Transverse colon (tissue), 4 donors: ENCODE measurements at regions of chr6 and their contacts with region 1.

Region 1: DNA sequence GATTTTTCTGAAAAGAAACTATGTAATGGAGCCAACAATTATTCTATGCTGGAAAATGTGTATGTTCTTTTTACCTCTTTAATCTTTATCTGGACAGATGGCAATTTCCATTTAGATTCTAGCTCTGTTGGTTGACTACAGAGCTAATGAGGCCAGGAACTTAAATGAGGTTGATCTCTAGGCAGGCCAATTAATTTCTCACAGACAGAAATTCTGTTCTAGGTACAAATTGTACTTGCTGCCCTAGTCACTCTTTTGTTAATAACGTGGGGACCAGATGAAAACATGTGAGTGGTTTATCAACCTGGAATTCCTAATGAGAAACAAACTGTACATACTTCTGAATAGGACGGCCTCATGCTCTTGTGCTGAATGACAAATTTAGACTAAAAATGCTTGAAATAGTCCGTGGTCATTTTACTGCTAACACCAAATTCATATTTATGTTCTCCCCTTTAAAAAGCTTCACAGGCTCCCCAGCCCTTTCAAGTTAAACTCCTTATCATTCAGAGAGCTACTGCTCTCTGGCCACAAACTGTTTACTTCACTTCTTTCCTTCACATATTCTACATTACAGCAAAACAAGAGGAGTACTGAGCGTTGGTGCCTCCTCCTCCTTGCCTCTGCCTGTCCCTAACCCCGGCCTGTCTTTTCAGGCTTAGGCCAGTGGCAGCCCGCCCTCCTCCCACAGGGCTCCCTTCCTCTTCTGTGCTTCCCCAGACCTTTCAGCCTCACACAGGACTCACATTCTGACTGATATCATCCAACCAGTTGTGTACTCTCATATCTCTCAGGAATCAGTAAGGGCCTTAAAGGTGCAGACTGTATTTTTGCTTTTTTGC is 41.4 kb downstream of the DTNBP1 start:
- DNase-seq: peak; percentile 20
- H3K4me3 ChIP-seq: no peak overlapping the region
- H3K27ac ChIP-seq: peak overlapping the region in 2 of 4 donors; percentile 14 to 37
- H3K4me1 ChIP-seq: peaks cover 0 to 29% (median 6%) of the 10 kb centered on the region in 4 donors
- H3K27me3 ChIP-seq: no peaks in the 10 kb centered on the region
- CTCF ChIP-seq: no peak
- EP300 ChIP-seq: no peak
- POLR2A ChIP-seq: no peak

Region 2: GRCh38 chr6:15077964-15078363 is 543.5 kb before region 1 on chr6:
- in situ Hi-C with region 1: no loop called
- intact Hi-C with region 1: no loop called
- DNase-seq: no peak
- H3K4me3 ChIP-seq: no peak overlapping the region
- H3K27ac ChIP-seq: no peak overlapping the region
- H3K4me1 ChIP-seq: no peaks in the 10 kb centered on the region
- H3K27me3 ChIP-seq: no peaks in the 10 kb centered on the region
- CTCF ChIP-seq: no peak
- EP300 ChIP-seq: no peak
- POLR2A ChIP-seq: no peak

Region 3: DNA sequence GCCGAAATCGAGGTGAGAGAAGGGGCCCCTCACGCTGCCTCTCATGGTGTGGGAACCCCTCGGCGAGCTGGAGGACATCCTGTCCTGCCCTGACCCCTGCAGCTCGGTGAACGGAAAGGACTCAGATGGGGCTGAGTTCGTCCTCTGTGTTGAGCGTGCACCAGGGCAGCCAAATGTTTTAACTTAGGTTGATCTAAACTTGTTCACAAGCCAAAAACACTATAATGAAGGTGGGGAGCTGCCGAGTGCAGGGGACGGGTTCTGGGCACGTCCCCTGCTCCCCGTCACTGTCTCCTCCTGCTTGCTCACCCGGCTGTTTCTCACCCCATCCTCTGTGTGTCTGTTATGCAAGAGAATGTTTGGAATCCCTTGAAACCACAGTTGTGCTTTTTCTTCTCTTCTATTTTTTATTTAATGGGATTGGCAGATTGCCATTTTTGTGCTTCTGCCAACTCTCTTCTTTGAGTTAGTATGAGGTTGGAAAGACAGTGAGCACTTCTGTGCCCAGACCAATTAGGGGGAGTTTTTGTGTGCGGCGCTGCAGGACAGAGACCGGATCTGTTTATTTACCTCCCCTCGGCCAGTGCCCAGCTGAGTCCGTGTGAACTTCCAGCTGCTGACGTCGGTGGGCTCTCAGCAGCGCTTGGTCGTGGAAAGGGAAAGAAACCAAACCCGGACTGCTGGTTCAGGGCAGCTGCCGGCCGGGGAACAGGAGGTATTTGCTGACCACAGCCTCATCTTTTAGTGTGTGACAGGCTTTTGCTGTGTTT is 116.7 kb before region 1 on chr6:
- in situ Hi-C with region 1: loop called in 1 of 4 experiments (anchors 25 kb)
- intact Hi-C with region 1: loop called (anchors 10 kb)
- DNase-seq: peak; percentile 48
- H3K4me3 ChIP-seq: peak overlapping the region in 2 of 4 donors; percentile 3 to 6
- H3K27ac ChIP-seq: peak overlapping the region; percentile 63 to 78 (median 66)
- H3K4me1 ChIP-seq: peaks cover 5 to 28% (median 7%) of the 10 kb centered on the region in 4 donors
- H3K27me3 ChIP-seq: no peaks in the 10 kb centered on the region
- CTCF ChIP-seq: no peak
- EP300 ChIP-seq: no peak
- POLR2A ChIP-seq: no peak

Region 4: DNA sequence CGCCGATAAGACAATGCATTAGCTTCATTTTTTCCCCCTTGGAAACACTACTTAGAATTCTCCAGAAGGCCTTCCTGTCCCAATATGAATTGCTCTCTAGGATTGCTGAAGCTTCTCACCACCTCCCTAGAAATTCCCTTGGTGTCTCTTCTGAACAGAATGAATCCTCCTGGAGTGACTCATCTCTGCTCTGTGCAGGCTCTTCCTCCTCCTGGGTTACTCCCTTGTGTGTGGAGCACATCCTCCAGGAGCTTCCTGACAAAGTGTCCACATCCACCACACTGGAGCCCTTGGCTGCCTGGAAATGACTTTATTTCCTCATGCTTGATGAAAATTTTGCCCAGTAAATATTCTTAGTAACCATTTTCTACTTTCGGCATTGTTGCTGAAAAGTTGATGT is 13.0 kb before region 1 on chr6:
- in situ Hi-C with region 1: no loop called
- intact Hi-C with region 1: no loop called
- DNase-seq: no peak
- H3K4me3 ChIP-seq: no peak overlapping the region
- H3K27ac ChIP-seq: no peak overlapping the region
- H3K4me1 ChIP-seq: peaks cover 0 to 6% (median 0%) of the 10 kb centered on the region in 4 donors
- H3K27me3 ChIP-seq: no peaks in the 10 kb centered on the region
- CTCF ChIP-seq: no peak
- EP300 ChIP-seq: no peak
- POLR2A ChIP-seq: no peak